Endothelial cell of umbilical vein (primary cell): ENCODE measurements at regions of chr7 and their contacts with region 1.

Region 1: GRCh38 chr7:99525713-99526440 is 21.4 kb downstream of the ZKSCAN5 start:
- DNase-seq: no peak
- H3K4me3 ChIP-seq: no peak overlapping the region
- H3K27ac ChIP-seq: no peak overlapping the region
- H3K4me1 ChIP-seq: no peaks in the 10 kb centered on the region
- H3K27me3 ChIP-seq: no peaks in the 10 kb centered on the region
- CTCF ChIP-seq: no peak
- POLR2A ChIP-seq: no peak

Region 2: GRCh38 chr7:99579956-99580777 is 54.3 kb after region 1 on chr7:
- CTCF ChIA-PET with region 1: interaction called, 10 read pairs
- POLR2A ChIA-PET with region 1: no interaction called
- dilution Hi-C with region 1: no loop called
- intact Hi-C with region 1: no loop called
- DNase-seq: peak; percentile 50
- H3K4me3 ChIP-seq: peak overlapping the region; percentile 28 to 33 (median 31)
- H3K27ac ChIP-seq: no peak overlapping the region
- H3K4me1 ChIP-seq: peaks cover 6% of the 10 kb centered on the region
- H3K27me3 ChIP-seq: peaks cover 0 to 2% of the 10 kb centered on the region in 2 experiments
- CTCF ChIP-seq: peak; percentile 40 to 68
- POLR2A ChIP-seq: no peak

Region 3: DNA sequence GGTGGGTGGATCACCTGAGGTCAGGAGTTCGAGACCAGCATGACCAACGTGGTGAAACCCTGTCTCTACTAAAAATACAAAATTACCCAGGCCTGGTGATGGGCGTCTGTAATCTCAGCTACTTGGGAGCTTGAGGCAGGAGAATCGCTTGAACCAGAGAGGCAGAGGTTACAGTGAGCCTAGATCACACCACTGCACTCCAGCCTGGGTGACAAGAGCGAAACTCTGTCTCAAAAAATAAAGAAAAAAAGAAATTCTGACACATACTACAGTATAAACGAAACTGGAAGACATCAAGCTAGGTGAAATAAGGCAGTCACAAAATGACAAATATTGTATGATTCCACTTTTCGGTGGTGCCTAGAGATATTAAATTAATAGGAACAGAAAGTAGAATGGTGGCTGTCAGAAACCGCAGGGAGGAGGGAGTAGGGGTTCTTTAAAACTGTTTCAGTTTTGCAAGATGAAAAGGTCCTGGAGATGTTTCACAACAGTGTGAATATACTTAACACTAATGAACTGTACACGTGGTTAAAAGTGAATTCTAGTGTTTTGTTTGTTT is 870.6 kb after region 1 on chr7:
- CTCF ChIA-PET with region 1: no interaction called
- POLR2A ChIA-PET with region 1: no interaction called
- dilution Hi-C with region 1: no loop called
- intact Hi-C with region 1: no loop called
- DNase-seq: no peak
- H3K4me3 ChIP-seq: no peak overlapping the region
- H3K27ac ChIP-seq: no peak overlapping the region
- H3K4me1 ChIP-seq: no peaks in the 10 kb centered on the region
- H3K27me3 ChIP-seq: peaks cover 3 to 14% of the 10 kb centered on the region in 2 experiments
- CTCF ChIP-seq: no peak
- POLR2A ChIP-seq: no peak